Endothelial cell of umbilical vein (primary cell): ENCODE measurements at regions of chrX and their contacts with region 1.

Region 1: DNA sequence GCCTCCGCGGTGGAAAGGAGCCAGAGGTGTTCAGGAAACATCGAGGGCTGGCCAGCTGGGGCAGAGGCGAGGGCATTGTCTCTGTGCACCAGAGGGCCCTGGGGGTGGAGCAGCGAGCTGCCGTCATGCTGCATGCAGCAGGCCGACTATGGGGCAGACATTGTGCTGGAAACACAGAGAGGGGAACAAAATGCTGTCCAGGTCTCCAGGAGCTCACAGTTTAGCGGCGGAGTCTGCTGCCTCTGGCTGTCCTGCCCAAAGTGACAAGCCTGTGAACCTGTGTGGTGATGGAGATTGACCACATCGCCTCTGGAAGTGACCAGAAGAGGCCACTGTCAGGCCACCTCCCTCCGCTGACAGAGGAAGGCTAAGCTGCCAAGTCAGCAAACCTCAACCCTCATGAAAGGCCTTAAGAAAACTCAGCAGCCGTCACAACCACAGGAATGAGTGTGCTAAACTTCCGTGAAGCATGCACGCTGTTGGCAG is 20.1 kb upstream of the SASH3 start:
- DNase-seq: peak; percentile 18
- H3K4me3 ChIP-seq: no peak overlapping the region
- H3K27ac ChIP-seq: no peak overlapping the region
- H3K4me1 ChIP-seq: no peaks in the 10 kb centered on the region
- H3K27me3 ChIP-seq: no peaks in the 10 kb centered on the region
- CTCF ChIP-seq: no peak
- POLR2A ChIP-seq: no peak

Region 2: DNA sequence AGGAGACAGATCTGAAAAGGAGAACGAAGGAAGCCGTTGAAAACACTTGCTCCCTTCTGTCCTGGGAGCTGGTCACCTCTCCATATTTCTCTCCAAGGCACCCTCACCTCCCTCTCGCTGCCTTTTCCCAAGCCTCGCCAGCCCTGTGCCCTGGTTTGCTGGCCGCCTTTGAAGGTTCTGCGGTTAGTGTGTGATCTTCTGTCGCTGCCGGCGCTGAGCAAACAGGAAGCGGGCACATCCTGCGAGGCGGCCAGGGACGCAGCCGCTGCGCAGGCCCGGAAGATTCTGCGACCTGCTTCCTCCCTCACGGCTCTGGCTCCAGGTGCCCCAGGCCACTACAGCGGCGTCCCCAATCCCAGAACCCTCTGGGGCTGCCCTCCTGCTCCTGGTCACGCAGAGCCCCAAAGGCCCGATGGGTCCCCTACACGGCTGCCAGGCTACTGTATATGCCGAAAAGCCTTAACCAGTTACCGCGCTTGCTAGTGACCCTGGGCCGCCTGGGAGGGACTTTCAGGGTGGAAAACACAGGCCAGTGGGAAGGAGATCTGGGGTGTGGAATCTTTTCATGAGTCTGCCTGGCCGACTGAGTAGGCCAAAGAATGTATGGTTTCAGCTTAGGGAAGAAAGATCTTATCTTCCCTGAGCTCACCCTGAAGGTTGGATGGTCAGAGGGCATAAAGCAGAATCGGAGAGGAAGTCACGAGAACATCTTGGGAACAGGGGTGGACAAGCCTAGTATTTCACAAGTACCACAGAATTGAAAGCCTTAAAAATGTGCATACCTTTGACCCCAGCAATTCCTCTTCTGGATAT is 17.8 kb after region 1 on chrX:
- CTCF ChIA-PET with region 1: interaction called, 3 read pairs
- POLR2A ChIA-PET with region 1: no interaction called
- dilution Hi-C with region 1: no loop called
- intact Hi-C with region 1: loop called (anchors 2 kb)
- DNase-seq: peak; percentile 44
- H3K4me3 ChIP-seq: no peak overlapping the region
- H3K27ac ChIP-seq: peak overlapping the region; percentile 86
- H3K4me1 ChIP-seq: peaks cover 14% of the 10 kb centered on the region
- H3K27me3 ChIP-seq: no peaks in the 10 kb centered on the region
- CTCF ChIP-seq: no peak
- POLR2A ChIP-seq: no peak

Region 3: GRCh38 chrX:129808829-129809796 is 49.5 kb after region 1 on chrX:
- CTCF ChIA-PET with region 1: no interaction called
- POLR2A ChIA-PET with region 1: no interaction called
- dilution Hi-C with region 1: no loop called
- intact Hi-C with region 1: loop called (anchors 2 kb)
- DNase-seq: no peak
- H3K4me3 ChIP-seq: no peak overlapping the region
- H3K27ac ChIP-seq: no peak overlapping the region
- H3K4me1 ChIP-seq: no peaks in the 10 kb centered on the region
- H3K27me3 ChIP-seq: no peaks in the 10 kb centered on the region
- CTCF ChIP-seq: no peak
- POLR2A ChIP-seq: no peak

Region 4: DNA sequence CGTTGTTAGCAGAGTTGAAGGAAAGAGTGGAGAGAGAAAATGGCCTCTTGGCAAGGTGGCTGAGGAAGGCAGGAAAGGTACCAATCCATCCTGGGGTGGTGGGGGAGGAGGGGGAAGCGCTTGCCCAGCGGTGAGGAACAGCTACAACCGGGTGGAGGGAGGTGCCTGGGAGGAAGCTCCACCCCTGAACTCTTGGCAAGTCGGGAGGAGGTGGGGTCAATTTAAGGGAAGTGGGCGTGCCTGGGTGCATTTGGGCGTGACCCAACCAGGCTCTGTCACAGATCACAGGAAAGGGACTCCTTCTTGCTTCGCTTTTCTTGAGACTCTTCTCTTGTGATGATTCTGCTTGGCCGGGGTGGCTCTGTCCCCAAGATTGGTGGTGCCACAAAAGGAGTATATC is 264.5 kb after region 1 on chrX:
- CTCF ChIA-PET with region 1: no interaction called
- POLR2A ChIA-PET with region 1: no interaction called
- dilution Hi-C with region 1: no loop called
- intact Hi-C with region 1: loop called (anchors 10 kb)
- DNase-seq: peak; percentile 28
- H3K4me3 ChIP-seq: no peak overlapping the region
- H3K27ac ChIP-seq: no peak overlapping the region
- H3K4me1 ChIP-seq: peaks cover 4% of the 10 kb centered on the region
- H3K27me3 ChIP-seq: no peaks in the 10 kb centered on the region
- CTCF ChIP-seq: no peak
- POLR2A ChIP-seq: no peak